PC-9 (cell line): ENCODE measurements at regions of chr3 and their contacts with region 1.

Region 1: DNA sequence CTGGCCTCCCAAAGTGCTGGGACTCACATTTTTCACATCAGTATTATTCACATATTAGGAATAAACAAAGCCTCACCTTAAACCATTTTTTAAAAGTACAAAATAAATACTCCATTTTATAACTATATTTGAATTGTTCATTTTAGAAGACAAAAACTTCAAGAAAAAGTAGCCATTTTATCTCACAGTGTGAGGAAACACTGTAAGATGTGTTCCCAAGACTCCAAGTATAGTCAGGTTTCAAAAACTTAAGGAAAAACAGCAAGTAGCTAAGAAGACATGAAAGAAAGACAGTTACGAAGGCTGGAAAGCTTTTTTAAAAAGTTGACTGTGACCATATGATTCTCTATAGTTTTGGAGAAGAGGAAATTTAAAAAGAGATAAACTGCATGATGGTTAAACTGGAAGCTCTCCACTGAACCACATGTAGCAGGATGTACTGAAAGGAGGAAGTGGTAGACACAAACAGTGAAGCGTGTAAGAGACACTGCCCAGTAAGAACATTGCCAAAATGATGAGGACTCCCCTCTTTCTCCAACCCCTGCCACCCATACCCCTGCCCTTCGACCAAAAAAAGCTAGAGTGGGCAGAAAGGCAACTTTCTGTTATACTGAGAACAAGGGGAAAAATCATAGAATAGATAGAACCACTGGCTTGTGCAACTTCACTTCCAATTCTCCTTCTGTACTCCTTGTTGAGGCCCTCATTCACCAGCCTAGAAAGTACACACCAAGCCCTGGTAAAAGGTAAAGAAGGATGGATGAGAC is 6.2 kb upstream of the TMF1 start:
- DNase-seq: no peak
- H3K4me3 ChIP-seq: no peak overlapping the region
- H3K27ac ChIP-seq: no peak overlapping the region
- H3K4me1 ChIP-seq: no peaks in the 10 kb centered on the region
- H3K27me3 ChIP-seq: no peaks in the 10 kb centered on the region
- CTCF ChIP-seq: no peak

Region 2: GRCh38 chr3:68996356-68996995 is 61.9 kb before region 1 on chr3:
- CTCF ChIA-PET with region 1: no interaction called
- POLR2A ChIA-PET with region 1: no interaction called
- intact Hi-C with region 1: no loop called
- DNase-seq: no peak
- H3K4me3 ChIP-seq: no peak overlapping the region
- H3K27ac ChIP-seq: no peak overlapping the region
- H3K4me1 ChIP-seq: no peaks in the 10 kb centered on the region
- H3K27me3 ChIP-seq: no peaks in the 10 kb centered on the region
- CTCF ChIP-seq: no peak

Region 3: GRCh38 chr3:69020424-69020823 is 37.9 kb before region 1 on chr3:
- CTCF ChIA-PET with region 1: no interaction called
- POLR2A ChIA-PET with region 1: no interaction called
- intact Hi-C with region 1: no loop called
- DNase-seq: no peak
- H3K4me3 ChIP-seq: no peak overlapping the region
- H3K27ac ChIP-seq: no peak overlapping the region
- H3K4me1 ChIP-seq: no peaks in the 10 kb centered on the region
- H3K27me3 ChIP-seq: no peaks in the 10 kb centered on the region
- CTCF ChIP-seq: peak; percentile 51; the same call in 1 of the 2 replicates

Region 4: DNA sequence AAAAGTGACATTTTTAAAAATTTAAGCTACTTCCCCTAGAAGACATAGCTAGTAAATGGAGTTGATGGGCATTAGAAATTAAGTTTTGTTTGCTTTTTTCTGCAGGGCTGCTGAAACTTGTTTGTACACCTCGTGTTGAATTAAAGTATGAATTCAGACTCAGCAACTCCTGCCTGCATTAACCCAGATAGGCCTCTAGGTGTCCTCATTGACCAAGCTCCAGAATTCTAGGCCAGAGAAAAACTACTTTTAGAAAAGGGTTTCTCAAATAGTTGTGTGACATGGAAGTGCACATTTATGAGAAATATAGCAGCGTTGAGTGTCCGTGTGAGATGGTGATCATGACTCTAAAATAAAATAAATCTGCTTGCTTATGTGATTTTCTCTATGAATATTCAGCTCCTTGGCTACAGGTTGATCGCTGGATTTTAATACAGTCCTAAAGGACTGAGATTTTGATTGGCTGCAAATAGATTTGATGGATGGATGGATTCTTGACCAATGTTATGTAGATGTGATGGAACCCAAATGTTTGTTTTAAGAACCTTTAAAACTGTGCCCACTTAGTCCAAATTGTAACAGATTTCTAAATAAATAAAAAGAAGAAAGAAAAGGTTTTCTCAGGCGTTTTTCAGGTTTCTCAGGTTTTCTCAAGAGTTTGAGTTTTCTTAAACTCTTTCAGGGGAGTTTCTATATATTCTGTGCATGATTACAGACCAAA is 103.4 kb after region 1 on chr3:
- CTCF ChIA-PET with region 1: no interaction called
- POLR2A ChIA-PET with region 1: no interaction called
- intact Hi-C with region 1: no loop called
- DNase-seq: peak; percentile 29 to 47
- H3K4me3 ChIP-seq: no peak overlapping the region
- H3K27ac ChIP-seq: no peak overlapping the region
- H3K4me1 ChIP-seq: peaks cover 15% of the 10 kb centered on the region; the same call in 1 of the 2 replicates
- H3K27me3 ChIP-seq: no peaks in the 10 kb centered on the region
- CTCF ChIP-seq: peak; percentile 92

Region 5: GRCh38 chr3:69294014-69294775 is 235.8 kb after region 1 on chr3:
- CTCF ChIA-PET with region 1: interaction called, 14 read pairs
- POLR2A ChIA-PET with region 1: no interaction called
- intact Hi-C with region 1: no loop called
- DNase-seq: peak; percentile 33 to 77
- H3K4me3 ChIP-seq: no peak overlapping the region
- H3K27ac ChIP-seq: peak overlapping the region; percentile 66
- H3K4me1 ChIP-seq: peaks cover 17% of the 10 kb centered on the region
- H3K27me3 ChIP-seq: no peaks in the 10 kb centered on the region
- CTCF ChIP-seq: no peak

Region 6: DNA sequence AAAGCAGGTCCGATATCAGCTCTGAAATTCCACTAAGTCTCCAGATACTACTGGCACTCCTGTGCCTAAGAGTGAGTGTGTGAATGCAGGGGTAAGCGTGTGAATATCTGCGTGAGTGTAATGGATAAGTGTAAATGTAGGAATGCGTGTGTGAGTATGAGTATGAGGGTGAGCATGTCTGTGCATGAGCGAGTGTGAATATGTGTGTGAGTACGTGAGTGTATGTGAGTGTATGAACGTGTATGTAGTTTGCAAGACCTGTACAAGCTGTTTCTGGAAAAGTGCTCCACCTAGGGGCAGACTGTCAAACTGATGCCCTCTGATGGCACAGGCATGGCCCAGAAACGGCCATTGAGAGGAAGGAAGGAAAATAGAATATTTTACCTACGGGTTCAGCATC is 351.9 kb after region 1 on chr3:
- CTCF ChIA-PET with region 1: interaction called, 13 read pairs
- POLR2A ChIA-PET with region 1: no interaction called
- intact Hi-C with region 1: no loop called
- DNase-seq: peak in 1 of 2 experiments; percentile 50
- H3K4me3 ChIP-seq: no peak overlapping the region
- H3K27ac ChIP-seq: no peak overlapping the region
- H3K4me1 ChIP-seq: no peaks in the 10 kb centered on the region
- H3K27me3 ChIP-seq: no peaks in the 10 kb centered on the region
- CTCF ChIP-seq: peak; percentile 68

Region 7: DNA sequence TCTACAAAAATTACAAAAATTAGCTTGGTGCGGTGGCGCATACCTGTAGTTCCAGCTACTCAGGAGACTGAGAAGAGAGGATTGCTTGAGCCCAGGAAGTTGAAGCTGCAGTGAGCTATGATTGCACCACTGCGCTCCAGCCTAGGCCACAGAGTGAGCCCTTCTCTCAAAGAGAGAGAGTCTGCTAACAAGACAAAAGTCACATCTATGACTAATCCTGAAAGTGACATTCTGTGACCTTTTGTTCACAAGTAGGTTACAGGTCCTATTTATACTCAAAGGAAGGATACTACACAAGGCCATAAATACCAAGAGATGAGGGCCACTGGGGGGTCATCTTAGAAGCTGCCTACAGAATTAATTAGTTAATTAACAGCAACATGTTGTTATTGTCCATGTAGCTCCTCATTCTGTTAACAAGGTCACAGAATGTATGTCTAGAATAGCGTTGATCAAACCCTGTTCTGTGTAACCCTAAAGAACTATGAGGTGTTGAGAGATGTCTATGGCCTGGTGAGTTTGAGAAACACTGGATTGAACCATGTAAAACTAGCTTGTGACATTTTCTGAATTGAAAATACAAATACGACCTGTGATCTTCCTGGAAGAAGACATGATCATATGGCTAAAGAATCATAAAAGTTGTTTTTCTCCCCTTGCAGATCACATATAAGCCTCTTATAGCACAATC is 1038.2 kb after region 1 on chr3:
- CTCF ChIA-PET with region 1: no interaction called
- POLR2A ChIA-PET with region 1: no interaction called
- intact Hi-C with region 1: no loop called
- DNase-seq: no peak
- H3K4me3 ChIP-seq: no peak overlapping the region
- H3K27ac ChIP-seq: no peak overlapping the region
- H3K4me1 ChIP-seq: no peaks in the 10 kb centered on the region
- H3K27me3 ChIP-seq: no peaks in the 10 kb centered on the region
- CTCF ChIP-seq: no peak